ENCODE measurements at regions of chr5 and their contacts with region 1.

Region 1: DNA sequence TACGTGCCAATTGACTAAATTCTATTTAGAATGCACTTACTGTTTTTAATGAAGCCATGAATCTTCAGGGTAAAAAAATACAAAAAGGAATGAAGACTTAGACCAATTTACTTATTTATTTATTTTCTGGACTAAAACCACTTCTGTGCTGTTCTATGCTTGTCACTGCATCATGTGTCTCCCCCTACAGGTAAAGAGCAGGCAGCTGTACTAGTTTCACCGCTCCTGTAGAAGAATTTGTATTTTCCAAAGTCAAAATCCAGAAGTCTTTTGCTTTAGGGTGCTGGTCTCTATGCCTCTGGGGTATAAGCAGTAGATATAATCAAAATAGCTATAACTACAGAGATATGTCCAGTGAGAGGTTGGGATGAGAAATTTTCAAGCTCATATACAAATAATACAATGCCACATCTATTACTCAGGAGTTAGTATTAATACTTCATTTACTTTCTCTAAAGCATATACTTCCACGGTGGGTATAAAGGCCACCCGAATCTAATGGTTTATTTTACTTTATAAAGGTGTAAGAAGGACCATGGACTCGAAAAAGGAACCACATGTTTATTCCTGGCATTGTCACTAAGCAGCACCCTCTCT is 591.5 kb downstream of the RAB3C start:
- DNase-seq: peak in 2 of 6 donors; percentile 5 to 14
- ATAC-seq: peak; percentile 53 to 88 (median 82)
- H3K4me3 ChIP-seq: no peak overlapping the region
- H3K27ac ChIP-seq: no peak overlapping the region
- H3K4me1 ChIP-seq: no peaks in the 10 kb centered on the region
- H3K27me3 ChIP-seq: no peaks in the 10 kb centered on the region
- CTCF ChIP-seq: peak; percentile 17 to 70 (median 52)

Region 2: DNA sequence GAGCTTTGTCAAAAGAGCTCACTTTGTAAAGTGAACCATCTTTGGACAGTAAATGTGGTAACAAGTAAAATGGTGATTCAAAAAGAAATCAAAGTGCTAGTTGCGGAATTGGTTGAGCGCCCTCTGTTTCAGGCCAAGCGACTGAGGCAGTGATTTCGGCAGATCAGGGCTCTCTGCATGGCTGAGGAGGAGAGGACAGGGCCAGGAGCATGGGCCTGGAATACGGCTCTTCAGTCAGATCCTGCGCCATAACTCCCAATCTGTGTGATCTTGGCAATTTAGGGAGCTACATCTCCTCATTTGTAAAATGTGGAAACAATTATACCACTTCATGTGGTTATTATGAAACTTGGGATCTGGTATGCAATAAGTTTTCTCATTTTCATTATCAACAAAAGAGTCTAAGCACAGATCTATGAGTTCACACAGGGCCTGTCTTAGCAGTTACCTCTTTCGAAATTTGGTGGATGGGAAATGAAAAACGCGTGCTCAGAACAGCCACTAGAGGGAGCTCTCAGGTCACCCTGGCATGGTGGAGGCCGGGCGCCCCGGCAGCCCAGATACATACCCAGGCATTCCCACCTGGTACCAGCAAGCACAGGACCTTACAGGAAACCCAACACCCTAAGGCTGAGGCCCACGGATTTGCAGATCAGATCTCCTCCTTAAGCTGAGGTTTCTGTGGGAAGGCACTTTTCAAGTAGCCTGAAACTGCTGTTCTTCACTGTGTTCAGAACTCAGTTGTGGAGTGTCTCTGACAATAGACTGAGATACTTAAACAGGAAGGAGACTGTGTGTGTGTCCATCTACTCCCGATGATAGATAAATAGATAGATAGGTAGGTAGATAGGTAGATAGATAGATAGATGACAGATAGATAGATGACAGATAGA is 287.8 kb before region 1 on chr5:
- intact Hi-C with region 1: loop called in 1 of 3 experiments (anchors 10 kb)
- DNase-seq: peak; percentile 32 to 73 (median 53)
- ATAC-seq: peak; percentile 79 to 92 (median 87)
- H3K4me3 ChIP-seq: no peak overlapping the region
- H3K27ac ChIP-seq: no peak overlapping the region
- H3K4me1 ChIP-seq: no peaks in the 10 kb centered on the region
- H3K27me3 ChIP-seq: no peaks in the 10 kb centered on the region
- CTCF ChIP-seq: peak; percentile 68 to 88 (median 86)

Region 3: DNA sequence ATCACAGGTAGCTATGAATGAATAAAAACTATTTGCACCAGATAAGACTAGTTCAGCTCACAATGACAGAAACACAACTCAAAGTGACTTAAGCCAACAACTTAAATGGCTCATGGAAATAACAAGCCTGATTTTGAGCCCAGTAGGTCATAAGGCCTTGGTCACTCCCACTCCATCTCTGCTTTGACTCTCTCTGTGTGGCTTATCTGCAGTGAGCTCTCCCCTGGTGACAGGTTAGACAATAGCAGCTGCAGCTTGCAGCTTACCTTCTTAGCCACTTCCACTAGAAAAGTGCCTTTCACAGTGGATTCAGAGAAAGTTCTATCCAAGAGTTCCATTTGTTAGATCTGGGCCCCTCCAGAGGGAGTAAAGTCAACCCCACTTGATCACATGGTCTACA is 275.8 kb before region 1 on chr5:
- intact Hi-C with region 1: loop called in 1 of 3 experiments (anchors 5 kb)
- DNase-seq: no peak
- ATAC-seq: no peak
- H3K4me3 ChIP-seq: no peak overlapping the region
- H3K27ac ChIP-seq: no peak overlapping the region
- H3K4me1 ChIP-seq: no peaks in the 10 kb centered on the region
- H3K27me3 ChIP-seq: no peaks in the 10 kb centered on the region
- CTCF ChIP-seq: no peak

Region 4: GRCh38 chr5:58912116-58912515 is 262.2 kb before region 1 on chr5:
- intact Hi-C with region 1: no loop called
- DNase-seq: no peak
- ATAC-seq: no peak
- H3K4me3 ChIP-seq: no peak overlapping the region
- H3K27ac ChIP-seq: no peak overlapping the region
- H3K4me1 ChIP-seq: no peaks in the 10 kb centered on the region
- H3K27me3 ChIP-seq: peaks cover 0 to 2% (median 0%) of the 10 kb centered on the region in 4 donors
- CTCF ChIP-seq: no peak

Measured in pancreas (tissue), 10 donors.